Activated T-helper 1 cell treated with anti-CD3 and anti-CD28 coated beads, Interleukin-12 subunit alpha, Interleukin-12 subunit beta, Interleukin-2, Interleukin-4 antibody, amounts not matched to agents 30 ng/mL and 10 ng/mL and 1 ng/mL, durations not matched to agents 14 hours and 24 hours and 36 hours (primary cell): ENCODE measurements at regions of chr5 and their contacts with region 1.

Region 1: DNA sequence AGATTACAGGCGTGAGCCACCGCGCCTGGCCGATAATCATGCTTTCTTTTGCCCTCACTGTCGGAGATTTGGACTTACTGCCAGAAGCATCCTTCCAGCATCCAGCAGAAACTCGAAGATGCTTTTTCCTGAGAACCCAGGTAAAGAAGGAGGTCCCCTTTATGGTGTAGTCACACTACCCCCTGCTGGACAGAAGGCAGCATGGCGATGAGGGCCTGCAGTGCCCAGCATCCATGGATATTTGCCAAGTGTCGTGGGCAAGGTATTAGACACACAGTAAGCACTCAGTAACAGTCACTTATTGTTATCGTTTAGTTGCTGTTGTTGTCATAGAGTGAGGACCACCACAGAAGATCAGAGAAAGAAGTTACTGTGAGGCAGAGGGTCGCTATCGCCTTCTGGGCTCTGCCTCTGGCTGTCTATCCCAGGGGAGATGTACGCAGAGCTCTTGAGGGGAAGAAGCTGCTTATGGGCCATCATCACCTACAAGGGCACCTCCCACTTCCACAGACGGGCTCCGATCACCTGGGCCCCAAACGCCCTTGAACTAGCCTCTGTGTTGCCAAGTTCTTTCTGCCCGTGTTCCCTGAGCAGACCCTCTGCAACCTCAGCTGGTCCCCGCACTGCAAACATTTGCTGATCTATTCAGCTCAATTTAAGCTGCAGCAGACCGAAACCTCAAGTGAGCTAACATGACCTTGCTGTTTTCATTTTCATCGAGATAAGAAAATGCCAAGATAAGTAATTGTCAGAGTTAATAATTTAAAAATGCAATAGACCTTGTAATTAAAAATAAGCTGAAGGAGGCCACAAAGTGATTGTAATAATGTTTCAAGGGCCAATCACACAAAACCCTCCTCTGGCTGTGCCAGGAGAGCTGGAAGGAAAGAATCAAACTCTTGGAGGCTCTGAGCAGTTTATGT is 23.9 kb downstream of the C5orf15 start:
- DNase-seq: no peak
- H3K4me3 Mint-ChIP-seq: no peak overlapping the region
- H3K27ac Mint-ChIP-seq: no peak overlapping the region
- H3K4me1 Mint-ChIP-seq: peaks cover 10% of the 10 kb centered on the region
- H3K27me3 Mint-ChIP-seq: peaks cover 1% of the 10 kb centered on the region

Region 2: GRCh38 chr5:133423618-133424282 is 520.8 kb before region 1 on chr5:
- intact Hi-C with region 1: loop called (anchors 1 kb)
- DNase-seq: peak; percentile 52
- H3K4me3 Mint-ChIP-seq: no peak overlapping the region
- H3K27ac Mint-ChIP-seq: no peak overlapping the region
- H3K4me1 Mint-ChIP-seq: peaks cover 10% of the 10 kb centered on the region
- H3K27me3 Mint-ChIP-seq: peaks cover 14% of the 10 kb centered on the region

Region 3: DNA sequence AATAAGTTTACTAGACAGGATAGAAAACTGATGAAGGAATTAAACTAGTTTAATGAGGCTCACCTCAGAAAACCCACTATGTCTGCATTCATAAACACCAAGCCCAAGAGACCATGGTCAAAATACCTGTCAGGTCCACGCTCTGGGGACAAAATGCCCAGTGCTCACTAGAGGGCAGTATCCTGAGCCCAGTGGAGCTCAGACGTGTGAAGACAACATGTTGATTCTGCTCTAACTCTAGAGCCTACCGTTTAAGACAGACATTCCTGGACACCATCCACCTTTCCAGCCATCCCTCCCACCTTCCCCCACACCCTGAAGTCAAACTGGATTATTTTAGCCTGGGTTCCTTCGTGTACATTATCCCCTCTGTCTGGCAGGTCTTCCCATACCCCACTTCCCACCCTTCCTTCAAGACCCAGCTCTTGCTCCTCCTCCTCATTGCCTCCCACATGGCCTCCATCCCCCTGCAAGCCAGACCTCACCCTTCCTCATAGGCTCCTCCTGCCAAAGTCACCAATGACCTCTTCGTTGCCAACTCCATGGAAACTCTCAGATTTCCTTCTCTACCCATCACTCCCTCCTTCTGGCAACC is 189.9 kb before region 1 on chr5:
- intact Hi-C with region 1: loop called (anchors 1 kb)
- DNase-seq: no peak
- H3K4me3 Mint-ChIP-seq: no peak overlapping the region
- H3K27ac Mint-ChIP-seq: no peak overlapping the region
- H3K4me1 Mint-ChIP-seq: no peaks in the 10 kb centered on the region
- H3K27me3 Mint-ChIP-seq: peaks cover 20% of the 10 kb centered on the region